ENCODE measurements at regions of chr6 and their contacts with region 1.

Region 1: DNA sequence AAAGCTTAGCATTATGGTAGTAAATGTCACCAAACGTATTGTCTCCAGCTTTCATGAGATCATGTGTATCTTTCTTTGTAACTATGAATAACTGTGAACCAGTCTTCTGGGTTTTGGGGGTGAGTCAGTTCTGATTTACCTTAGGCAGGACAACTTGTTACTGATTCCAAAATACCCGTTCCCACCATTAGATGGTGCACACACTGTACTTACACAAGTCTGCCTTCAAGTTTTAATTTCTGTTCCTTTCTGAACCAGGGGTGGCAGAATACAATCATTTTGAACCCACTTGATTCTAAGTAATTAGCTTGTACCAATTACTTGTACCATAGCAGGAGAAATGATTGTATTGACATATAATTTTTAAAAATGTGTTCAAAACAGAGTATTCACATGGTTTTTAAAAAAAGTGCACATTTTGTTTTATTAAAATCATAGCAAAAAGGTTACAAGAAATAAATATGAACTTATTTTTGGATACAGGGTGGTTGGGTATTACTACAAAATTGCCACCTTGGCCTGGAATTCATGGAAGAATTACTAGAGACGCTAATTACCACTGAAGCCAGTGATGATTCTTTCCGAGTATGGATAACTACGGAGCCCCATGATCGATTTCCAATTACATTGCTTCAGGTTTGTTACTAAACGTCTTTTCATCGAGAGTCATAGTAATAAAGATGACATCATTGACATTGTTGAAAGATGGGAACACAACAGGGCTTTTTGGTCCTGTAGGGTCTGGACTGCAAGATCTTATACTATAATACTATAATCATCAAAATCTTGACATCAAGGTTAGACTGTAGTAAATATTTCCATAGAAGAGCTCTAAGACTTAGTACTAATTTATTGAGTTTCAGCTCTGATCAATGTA is 75.2 kb upstream of the GLP1R start:
- H3K4me3 ChIP-seq: no peak overlapping the region
- H3K27ac ChIP-seq: no peak overlapping the region
- H3K4me1 ChIP-seq: peaks cover 43% of the 10 kb centered on the region
- CTCF ChIP-seq: peak; percentile 83

Region 2: DNA sequence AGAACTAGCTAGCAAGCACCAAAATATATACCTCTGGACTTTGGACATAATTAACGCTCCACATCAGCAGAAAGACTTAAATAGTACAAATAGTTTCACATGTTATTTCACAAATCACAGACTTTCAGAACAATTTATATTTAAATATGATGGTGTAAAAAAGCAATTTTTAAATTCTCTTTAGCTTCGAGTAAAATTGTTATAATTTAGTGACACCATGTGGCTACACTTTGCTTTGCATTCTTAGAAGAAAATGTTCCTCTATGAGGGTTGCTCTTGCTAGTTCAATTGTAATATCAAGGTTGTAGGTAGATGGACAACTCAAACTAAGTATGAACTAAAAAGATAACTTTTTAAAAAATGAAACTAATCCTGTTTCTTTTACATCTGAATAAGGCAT is 402.7 kb before region 1 on chr6:
- CTCF ChIA-PET with region 1: no interaction called
- POLR2A ChIA-PET with region 1: no interaction called
- H3K4me3 ChIP-seq: no peak overlapping the region
- H3K27ac ChIP-seq: no peak overlapping the region
- H3K4me1 ChIP-seq: peaks cover 7% of the 10 kb centered on the region; the same call in 1 of the 2 replicates
- CTCF ChIP-seq: 0 out of 2 replicates have a peak, but pooled peaks have one; percentile 20

Region 3: GRCh38 chr6:38861926-38862401 is 111.5 kb before region 1 on chr6:
- CTCF ChIA-PET with region 1: no interaction called
- POLR2A ChIA-PET with region 1: no interaction called
- H3K4me3 ChIP-seq: no peak overlapping the region
- H3K27ac ChIP-seq: no peak overlapping the region
- H3K4me1 ChIP-seq: no peaks in the 10 kb centered on the region
- CTCF ChIP-seq: no peak

Region 4: DNA sequence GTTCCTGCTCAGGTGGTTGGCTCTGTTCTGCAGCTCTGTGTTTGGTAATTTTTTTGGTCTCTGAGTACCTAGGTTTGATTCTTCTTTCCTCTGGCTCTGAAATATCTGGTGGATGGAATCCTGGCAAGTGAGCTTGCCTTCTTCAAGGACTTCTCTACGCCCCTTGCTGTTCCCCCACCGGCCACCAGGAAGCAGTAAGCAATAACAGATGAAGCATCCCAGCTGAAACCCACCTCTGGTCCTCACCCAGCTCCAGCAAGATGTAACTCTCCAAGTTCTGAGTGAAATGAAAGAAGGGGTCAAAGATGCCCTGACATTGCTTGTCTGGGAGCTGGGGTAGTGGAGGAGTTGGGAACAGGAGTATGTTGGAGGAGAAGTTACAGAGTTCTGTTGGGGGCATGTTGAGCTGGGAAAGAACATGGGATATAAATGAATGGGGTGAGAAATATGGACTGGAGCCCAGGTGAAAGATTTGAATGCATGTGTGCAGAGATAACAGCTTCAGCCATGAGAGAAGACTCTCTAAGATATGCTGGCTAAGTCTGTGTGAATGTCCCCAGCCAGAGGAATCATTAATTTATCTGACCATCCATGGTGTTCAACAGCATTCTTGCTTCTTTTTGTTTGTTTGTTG is 23.8 kb after region 1 on chr6:
- CTCF ChIA-PET with region 1: interaction called, 77 read pairs
- POLR2A ChIA-PET with region 1: no interaction called
- H3K4me3 ChIP-seq: no peak overlapping the region
- H3K27ac ChIP-seq: no peak overlapping the region
- H3K4me1 ChIP-seq: no peaks in the 10 kb centered on the region
- CTCF ChIP-seq: peak; percentile 42

Region 5: DNA sequence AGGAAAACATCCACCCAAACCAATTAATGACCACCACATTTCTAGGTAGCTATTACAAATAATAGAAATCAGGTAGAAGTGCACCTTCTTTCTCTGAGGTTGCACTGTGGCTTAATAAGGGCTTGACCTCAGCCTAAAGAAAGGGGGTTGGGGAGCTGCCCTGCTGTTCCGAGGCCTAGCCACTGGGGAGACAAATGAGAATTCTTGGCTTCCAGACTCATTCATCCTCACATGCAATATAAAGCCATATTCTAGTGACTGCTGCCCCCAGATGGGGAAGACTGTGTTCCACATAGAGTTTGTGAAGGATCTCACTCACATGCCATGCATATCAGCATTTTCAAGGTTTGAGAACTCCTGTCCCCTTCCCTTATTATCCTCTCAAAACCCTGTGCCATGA is 118.7 kb after region 1 on chr6:
- CTCF ChIA-PET with region 1: interaction called, 26 read pairs
- POLR2A ChIA-PET with region 1: no interaction called
- H3K4me3 ChIP-seq: no peak overlapping the region
- H3K27ac ChIP-seq: no peak overlapping the region
- H3K4me1 ChIP-seq: peaks cover 5% of the 10 kb centered on the region; the same call in 1 of the 2 replicates
- CTCF ChIP-seq: peak; percentile 83

Region 6: GRCh38 chr6:39128106-39128505 is 154.7 kb after region 1 on chr6:
- CTCF ChIA-PET with region 1: interaction called, 14 read pairs
- POLR2A ChIA-PET with region 1: no interaction called
- H3K4me3 ChIP-seq: no peak overlapping the region
- H3K27ac ChIP-seq: no peak overlapping the region
- H3K4me1 ChIP-seq: peaks cover 5% of the 10 kb centered on the region
- CTCF ChIP-seq: no peak

Region 7: DNA sequence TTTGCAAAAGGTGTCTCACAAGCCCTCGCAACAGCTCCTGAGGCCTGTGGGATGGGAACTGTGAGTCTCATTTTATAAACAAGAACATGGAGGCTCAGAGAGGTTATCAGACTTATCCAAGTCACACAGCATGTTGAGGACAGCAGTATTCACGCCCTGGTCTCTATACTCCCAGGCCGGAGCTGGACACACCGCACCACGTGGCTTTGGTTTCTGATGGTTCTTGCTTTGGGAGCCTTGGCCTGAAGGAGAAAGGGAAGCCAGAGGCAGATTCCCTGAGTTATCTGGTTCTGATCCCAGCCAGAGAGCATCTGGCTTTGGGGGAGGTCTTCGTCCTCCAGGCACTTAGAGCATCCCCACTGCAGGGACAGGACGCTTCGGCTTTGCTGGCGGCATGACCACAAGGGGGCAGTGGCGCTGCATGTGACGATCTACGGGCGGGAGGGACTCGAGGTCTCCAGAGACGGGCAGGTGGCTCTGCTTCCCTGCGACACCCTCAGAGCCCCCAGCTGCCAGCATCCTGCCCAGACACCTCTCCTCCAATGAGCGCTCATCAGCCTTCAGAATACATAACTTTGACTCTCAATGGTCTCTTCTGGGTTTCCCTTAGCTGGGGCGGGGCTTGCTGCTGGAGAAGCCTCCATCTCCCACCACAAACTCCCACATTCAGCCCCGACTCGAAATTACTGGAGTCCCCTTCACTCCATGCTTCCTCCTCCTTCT is 192.9 kb after region 1 on chr6:
- CTCF ChIA-PET with region 1: interaction called, 33 read pairs
- POLR2A ChIA-PET with region 1: no interaction called
- H3K4me3 ChIP-seq: no peak overlapping the region
- H3K27ac ChIP-seq: no peak overlapping the region
- H3K4me1 ChIP-seq: no peaks in the 10 kb centered on the region
- CTCF ChIP-seq: peak; percentile 96

Region 8: GRCh38 chr6:39289490-39289889 is 316.1 kb after region 1 on chr6:
- CTCF ChIA-PET with region 1: no interaction called
- POLR2A ChIA-PET with region 1: no interaction called
- H3K4me3 ChIP-seq: no peak overlapping the region
- H3K27ac ChIP-seq: no peak overlapping the region
- H3K4me1 ChIP-seq: 0 out of 2 replicates have a peak, but pooled peaks cover 2% of the 10 kb centered on the region
- CTCF ChIP-seq: no peak

Region 9: GRCh38 chr6:39302669-39303424 is 329.4 kb after region 1 on chr6:
- CTCF ChIA-PET with region 1: interaction called, 167 read pairs
- POLR2A ChIA-PET with region 1: no interaction called
- H3K4me3 ChIP-seq: no peak overlapping the region
- H3K27ac ChIP-seq: no peak overlapping the region
- H3K4me1 ChIP-seq: no peaks in the 10 kb centered on the region
- CTCF ChIP-seq: peak; percentile 96

Measured in HEK293 (cell line).